IMR-90 (cell line): ENCODE measurements at regions of chr14 and their contacts with region 1.

Region 1: DNA sequence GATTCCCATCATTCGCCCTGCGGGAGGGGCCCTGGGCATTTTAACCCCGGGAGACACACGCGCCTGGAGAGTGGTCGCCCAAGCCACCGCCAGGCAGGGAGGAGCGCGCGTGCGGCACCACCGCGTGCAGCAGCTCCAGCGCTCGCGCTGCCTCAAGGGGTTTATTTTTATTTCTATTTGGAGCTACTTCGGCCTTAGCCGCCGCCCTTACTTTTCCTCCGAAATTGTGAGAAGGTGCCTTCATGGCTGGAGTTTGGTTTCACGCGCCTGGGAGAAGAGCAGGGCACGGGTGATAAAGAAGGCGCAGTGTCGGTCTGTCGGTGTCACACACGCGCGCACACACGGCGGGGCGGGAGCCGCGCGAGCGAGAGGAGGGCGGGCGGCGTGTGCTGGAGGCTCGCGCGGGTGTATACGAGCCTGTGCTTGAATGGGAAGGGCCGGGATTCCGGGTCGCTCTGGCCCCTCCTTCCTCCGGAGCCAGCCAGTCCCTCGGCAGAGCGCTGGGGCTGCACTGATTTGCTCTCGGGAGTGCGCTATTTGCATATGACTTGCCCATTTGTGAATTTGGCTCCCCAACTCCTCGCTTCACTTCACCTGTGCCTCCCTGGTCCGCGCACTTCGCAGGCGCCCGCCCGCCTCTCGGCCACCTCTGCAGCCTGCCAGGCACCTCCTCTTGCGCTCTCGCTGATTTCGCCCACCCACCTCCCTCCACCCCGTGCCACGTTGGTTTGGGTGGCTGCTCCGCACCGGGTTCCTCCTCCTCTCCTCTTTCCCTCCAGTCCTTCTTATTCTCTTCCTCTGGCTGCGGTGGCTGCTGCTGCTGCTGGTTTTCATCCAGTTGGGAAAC is 932.3 kb downstream of the DIO2 start:
- DNase-seq: peak; percentile 92
- ATAC-seq: peak; percentile 100
- H3K4me3 ChIP-seq: peak overlapping the region; percentile 88
- H3K27ac ChIP-seq: no peak overlapping the region
- H3K4me1 ChIP-seq: peaks cover 1% of the 10 kb centered on the region; the same call in 1 of the 2 replicates
- H3K27me3 ChIP-seq: peaks cover 20% of the 10 kb centered on the region
- CTCF ChIP-seq: no peak
- POLR2A ChIP-seq: no peak
- RAD21 ChIP-seq: no peak; the same call in 1 of the 2 replicates

Region 2: DNA sequence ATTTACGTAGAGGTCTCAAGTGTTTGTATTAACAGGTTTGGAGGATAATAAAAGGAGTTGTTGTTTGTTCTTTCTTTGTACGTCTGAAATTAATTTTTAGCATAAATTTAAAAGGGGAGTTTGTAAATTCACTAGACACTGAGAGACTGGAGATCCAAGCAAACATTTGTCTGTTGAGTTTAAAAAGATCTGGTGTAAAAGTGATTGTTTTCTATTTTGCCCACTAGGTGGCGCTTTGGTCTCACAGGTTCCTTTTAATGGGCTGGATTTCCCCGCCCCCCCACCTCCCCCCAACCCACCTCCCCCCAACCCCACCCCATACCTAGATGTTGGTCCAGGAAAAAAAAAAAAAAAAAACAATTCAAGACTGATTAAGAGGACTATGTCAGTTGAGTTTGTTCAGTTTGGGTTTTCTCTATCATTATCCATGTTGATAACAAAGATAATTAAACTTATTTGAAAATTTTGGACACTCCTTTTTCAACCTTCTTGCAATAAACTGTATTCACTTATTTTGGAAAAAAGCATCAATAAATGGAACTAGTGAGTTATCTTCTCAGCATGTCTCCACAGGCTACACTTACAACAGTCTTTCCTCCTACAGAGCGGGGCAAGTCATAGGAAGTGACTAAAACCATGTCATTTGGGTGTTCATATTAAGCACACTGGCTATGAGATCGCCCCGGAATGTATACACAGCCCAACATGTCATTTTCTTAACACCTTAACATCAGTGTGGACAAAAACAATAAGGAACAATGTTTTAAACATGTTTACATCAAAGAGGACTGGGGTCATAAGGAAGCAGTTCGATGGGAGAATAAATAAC is 267.7 kb before region 1 on chr14:
- CTCF ChIA-PET with region 1: no interaction called
- POLR2A ChIA-PET with region 1: no interaction called
- dilution Hi-C with region 1: no loop called
- in situ Hi-C with region 1: no loop called
- intact Hi-C with region 1: loop called (anchors 5 kb)
- DNase-seq: peak; percentile 84
- ATAC-seq: peak; percentile 86
- H3K4me3 ChIP-seq: no peak overlapping the region
- H3K27ac ChIP-seq: no peak overlapping the region
- H3K4me1 ChIP-seq: no peaks in the 10 kb centered on the region; the same call in 1 of the 2 replicates
- H3K27me3 ChIP-seq: no peaks in the 10 kb centered on the region
- CTCF ChIP-seq: peak; percentile 56
- POLR2A ChIP-seq: no peak
- RAD21 ChIP-seq: peak; percentile 63

Region 3: GRCh38 chr14:79363291-79363690 is 84.3 kb after region 1 on chr14:
- CTCF ChIA-PET with region 1: no interaction called
- POLR2A ChIA-PET with region 1: no interaction called
- dilution Hi-C with region 1: no loop called
- in situ Hi-C with region 1: no loop called
- intact Hi-C with region 1: no loop called
- DNase-seq: no peak
- ATAC-seq: no peak
- H3K4me3 ChIP-seq: no peak overlapping the region
- H3K27ac ChIP-seq: no peak overlapping the region
- H3K4me1 ChIP-seq: no peaks in the 10 kb centered on the region
- H3K27me3 ChIP-seq: no peaks in the 10 kb centered on the region
- CTCF ChIP-seq: no peak
- POLR2A ChIP-seq: no peak
- RAD21 ChIP-seq: no peak

Region 4: DNA sequence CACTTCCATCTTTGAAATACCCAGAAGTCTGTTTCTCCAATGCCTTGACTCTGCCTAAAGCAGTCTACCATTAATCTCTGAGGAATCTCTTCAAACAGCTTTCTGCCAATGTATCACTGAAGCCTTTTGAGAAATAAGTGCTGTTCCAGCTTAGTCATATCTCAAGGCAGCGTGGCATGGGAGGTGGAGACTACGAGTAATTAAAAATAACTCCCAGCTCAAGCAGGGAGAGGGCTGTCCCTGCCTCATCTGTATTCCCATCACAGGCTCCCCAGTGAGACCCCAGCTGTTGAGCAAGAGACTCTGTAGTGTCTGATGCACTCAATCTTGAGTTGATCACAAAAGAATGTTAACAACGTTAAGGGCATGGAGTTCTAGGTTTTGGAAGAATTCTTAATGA is 231.6 kb after region 1 on chr14:
- CTCF ChIA-PET with region 1: no interaction called
- POLR2A ChIA-PET with region 1: no interaction called
- dilution Hi-C with region 1: no loop called
- in situ Hi-C with region 1: no loop called
- intact Hi-C with region 1: loop called (anchors 10 kb)
- DNase-seq: peak; percentile 65
- ATAC-seq: peak; percentile 73
- H3K4me3 ChIP-seq: no peak overlapping the region
- H3K27ac ChIP-seq: no peak overlapping the region
- H3K4me1 ChIP-seq: peaks cover 15% of the 10 kb centered on the region
- H3K27me3 ChIP-seq: no peaks in the 10 kb centered on the region
- CTCF ChIP-seq: no peak
- POLR2A ChIP-seq: no peak
- RAD21 ChIP-seq: no peak

Region 5: DNA sequence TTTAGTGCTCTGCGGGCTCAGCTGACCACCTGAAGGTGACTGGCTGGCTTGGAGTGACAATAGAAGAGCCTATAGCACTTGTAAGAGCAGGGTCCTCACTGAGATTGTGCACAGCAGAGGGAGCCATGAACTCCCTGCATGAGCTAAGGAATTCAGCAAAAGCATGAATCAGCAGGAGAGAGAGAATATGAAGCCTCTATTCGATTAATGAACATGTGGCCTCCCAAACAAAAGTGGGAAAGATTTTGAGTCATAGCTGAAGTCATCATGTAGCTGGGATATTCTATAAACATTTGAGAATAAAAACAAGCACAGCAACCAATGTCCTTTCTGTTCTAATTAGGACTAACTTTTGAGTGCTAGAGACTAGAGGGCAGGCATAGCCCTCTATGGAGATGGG is 305.7 kb after region 1 on chr14:
- CTCF ChIA-PET with region 1: no interaction called
- POLR2A ChIA-PET with region 1: no interaction called
- dilution Hi-C with region 1: no loop called
- in situ Hi-C with region 1: no loop called
- intact Hi-C with region 1: loop called (anchors 2 kb)
- DNase-seq: peak; percentile 98
- ATAC-seq: peak; percentile 79
- H3K4me3 ChIP-seq: no peak overlapping the region
- H3K27ac ChIP-seq: peak overlapping the region; percentile 85
- H3K4me1 ChIP-seq: peaks cover 14% of the 10 kb centered on the region
- H3K27me3 ChIP-seq: no peaks in the 10 kb centered on the region
- CTCF ChIP-seq: peak; percentile 53
- POLR2A ChIP-seq: no peak
- RAD21 ChIP-seq: peak; percentile 59